K562 (cell line): ENCODE measurements at regions of chr17 and their contacts with region 1.

Region 1: DNA sequence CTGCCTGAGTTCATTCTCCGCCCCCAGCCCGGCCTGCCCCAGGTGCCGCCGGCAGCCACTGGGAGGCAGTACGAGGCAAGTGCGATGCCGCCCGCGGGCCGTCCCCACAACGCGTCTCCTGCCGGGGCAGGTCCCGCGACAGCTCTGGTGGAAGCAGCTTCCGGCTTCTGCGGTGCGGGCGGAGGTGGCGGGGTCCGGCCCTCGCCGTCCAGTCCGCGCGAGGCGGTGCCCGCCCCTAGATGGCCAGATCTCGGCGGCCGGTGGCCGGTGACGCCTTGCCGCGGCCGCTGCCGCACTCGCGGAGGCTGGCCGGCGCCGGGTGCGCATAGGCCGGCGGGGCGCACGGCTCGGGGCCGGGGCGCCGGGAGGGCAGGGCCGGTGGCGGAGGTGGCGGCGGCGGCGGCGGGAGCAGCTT is 1.8 kb downstream of the GJD3 start:
- DNase-seq: peak; percentile 90 to 91 (median 91)
- ATAC-seq: peak; percentile 94
- H3K4me3 ChIP-seq: peak overlapping the region; percentile 58
- H3K27ac ChIP-seq: peak overlapping the region; percentile 68; the same call in 1 of the 3 replicates
- H3K4me1 ChIP-seq: peaks cover 3 to 51% of the 10 kb centered on the region in 2 experiments; a peak in 3 of 5 replicates
- H3K27me3 ChIP-seq: no peaks in the 10 kb centered on the region
- CTCF ChIP-seq: peak; percentile 88 to 94 (median 89)
- EP300 ChIP-seq: no peak
- POLR2A ChIP-seq: peak; percentile 42; the same call in 1 of the 2 replicates
- RAD21 ChIP-seq: peak; percentile 67 to 93

Region 2: GRCh38 chr17:40021451-40021971 is 341.2 kb before region 1 on chr17:
- CTCF ChIA-PET with region 1: no interaction called
- POLR2A ChIA-PET with region 1: no interaction called
- in situ Hi-C with region 1: loop called (anchors 10 kb)
- intact Hi-C with region 1: loop called (anchors 10 kb)
- DNase-seq: peak in 1 of 4 experiments; percentile 9
- ATAC-seq: no peak
- H3K4me3 ChIP-seq: no peak overlapping the region
- H3K27ac ChIP-seq: no peak overlapping the region
- H3K4me1 ChIP-seq: peaks cover 0 to 35% of the 10 kb centered on the region in 2 experiments; a peak in 3 of 5 replicates
- H3K27me3 ChIP-seq: no peaks in the 10 kb centered on the region
- CTCF ChIP-seq: no peak
- EP300 ChIP-seq: no peak
- POLR2A ChIP-seq: no peak
- RAD21 ChIP-seq: no peak

Region 3: GRCh38 chr17:40443583-40444327 is 81.1 kb after region 1 on chr17:
- CTCF ChIA-PET with region 1: interaction called, 7 read pairs
- POLR2A ChIA-PET with region 1: no interaction called
- in situ Hi-C with region 1: no loop called
- intact Hi-C with region 1: loop called (anchors 5 kb)
- DNase-seq: peak; percentile 85 to 87 (median 86)
- ATAC-seq: peak; percentile 86
- H3K4me3 ChIP-seq: peak overlapping the region; percentile 44
- H3K27ac ChIP-seq: peak overlapping the region; percentile 80
- H3K4me1 ChIP-seq: peaks cover 32% of the 10 kb centered on the region in 2 experiments
- H3K27me3 ChIP-seq: no peaks in the 10 kb centered on the region
- CTCF ChIP-seq: peak; percentile 67 to 81 (median 70)
- EP300 ChIP-seq: no peak
- POLR2A ChIP-seq: no peak
- RAD21 ChIP-seq: peak; percentile 42 to 67

Region 4: GRCh38 chr17:40531051-40531991 is 168.6 kb after region 1 on chr17:
- CTCF ChIA-PET with region 1: interaction called, 28 read pairs
- POLR2A ChIA-PET with region 1: interaction called, 7 read pairs
- in situ Hi-C with region 1: loop called (anchors 5 kb)
- intact Hi-C with region 1: loop called (anchors 1 kb)
- DNase-seq: no peak
- ATAC-seq: no peak
- H3K4me3 ChIP-seq: no peak overlapping the region
- H3K27ac ChIP-seq: no peak overlapping the region
- H3K4me1 ChIP-seq: peaks cover 9 to 31% of the 10 kb centered on the region in 2 experiments
- H3K27me3 ChIP-seq: no peaks in the 10 kb centered on the region
- CTCF ChIP-seq: no peak
- EP300 ChIP-seq: no peak
- POLR2A ChIP-seq: no peak
- RAD21 ChIP-seq: no peak

Region 5: DNA sequence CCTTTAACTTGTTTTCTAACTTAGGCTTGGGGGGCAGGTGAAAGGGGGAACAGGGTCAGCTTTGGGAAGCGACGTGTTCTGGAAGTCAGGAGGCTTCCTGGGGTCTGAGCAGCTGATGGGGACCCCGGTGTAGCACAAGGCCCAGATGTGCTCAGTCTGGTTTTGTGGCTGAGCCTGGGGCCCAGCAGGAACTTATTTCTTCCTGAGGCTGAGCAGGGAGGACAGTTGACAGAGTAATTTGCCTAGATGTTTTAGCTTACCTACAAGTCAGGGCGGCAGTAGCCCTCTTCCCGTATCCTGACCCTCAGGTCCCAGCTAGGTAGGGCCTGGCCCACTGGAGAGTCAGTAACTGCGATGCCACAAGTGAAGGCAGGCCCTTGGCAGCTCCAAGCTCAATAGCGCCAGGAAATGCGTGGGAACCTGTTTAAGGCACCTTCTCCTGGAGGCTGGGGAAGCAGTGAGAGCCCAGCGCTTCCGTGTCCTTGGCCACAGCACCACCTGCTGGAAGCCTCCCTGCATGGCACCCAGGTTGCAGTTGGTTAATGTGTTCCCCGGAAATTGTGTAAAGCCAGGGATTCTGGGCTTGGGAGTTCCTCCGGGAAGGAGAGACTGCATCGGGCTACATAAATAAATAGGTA is 197.4 kb after region 1 on chr17:
- CTCF ChIA-PET with region 1: interaction called, 17 read pairs
- POLR2A ChIA-PET with region 1: interaction called, 5 read pairs
- in situ Hi-C with region 1: no loop called
- intact Hi-C with region 1: loop called (anchors 1 kb)
- DNase-seq: peak; percentile 91 to 94 (median 92)
- ATAC-seq: peak; percentile 89
- H3K4me3 ChIP-seq: peak overlapping the region; percentile 26
- H3K27ac ChIP-seq: peak overlapping the region; percentile 30; the same call in 2 of the 3 replicates
- H3K4me1 ChIP-seq: peaks cover 29 to 36% of the 10 kb centered on the region in 2 experiments
- H3K27me3 ChIP-seq: peaks cover 5 to 16% of the 10 kb centered on the region in 2 experiments; a peak in 2 of 5 replicates
- CTCF ChIP-seq: peak; percentile 95 to 99 (median 98)
- EP300 ChIP-seq: peak; percentile 33; the same call in 1 of the 2 replicates
- POLR2A ChIP-seq: no peak
- RAD21 ChIP-seq: peak; percentile 88 to 97